Esophagus muscularis mucosa (tissue), 4 donors: ENCODE measurements at regions of chr12 and their contacts with region 1.

Region 1: DNA sequence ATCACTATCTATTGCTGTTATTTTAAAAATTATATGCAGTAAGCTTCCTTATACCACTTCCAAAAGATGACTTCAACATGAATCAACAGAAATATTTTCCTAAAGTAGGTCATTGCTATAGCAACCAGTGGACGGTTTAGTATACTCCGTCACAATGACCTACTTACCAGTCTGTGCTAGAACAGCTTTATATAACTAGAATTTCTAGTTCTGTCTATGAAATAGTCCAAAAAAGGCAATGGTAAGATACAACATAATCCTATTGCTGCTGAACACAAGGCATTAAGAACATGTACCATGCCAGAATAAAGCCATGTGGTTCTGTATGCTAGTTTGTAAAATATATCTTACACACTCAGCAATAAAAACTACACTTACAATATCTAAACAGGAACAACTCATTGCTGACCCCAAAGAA is 40.7 kb upstream of the MTERF2 start:
- DNase-seq: no peak
- H3K4me3 ChIP-seq: peak overlapping the region in 3 of 4 donors; percentile 5 to 27 (median 14)
- H3K27ac ChIP-seq: peak overlapping the region; percentile 75 to 88 (median 78)
- H3K4me1 ChIP-seq: peaks cover 50 to 68% (median 63%) of the 10 kb centered on the region in 4 donors
- H3K27me3 ChIP-seq: no peaks in the 10 kb centered on the region
- CTCF ChIP-seq: no peak
- EP300 ChIP-seq: peak; percentile 56
- POLR2A ChIP-seq: no peak

Region 2: GRCh38 chr12:106955377-106956047 is 72.1 kb before region 1 on chr12 and contains the start of gene TMEM263:
- intact Hi-C with region 1: loop called (anchors 5 kb)
- DNase-seq: peak; percentile 97
- H3K4me3 ChIP-seq: peak within 1 kb of the TSS; percentile 82 to 95 (median 94)
- H3K27ac ChIP-seq: peak within 1 kb of the TSS; percentile 96 to 100 (median 98)
- H3K4me1 ChIP-seq: peaks cover 22 to 43% (median 37%) of the 10 kb centered on the region in 4 donors
- H3K27me3 ChIP-seq: no peaks in the 10 kb centered on the region
- CTCF ChIP-seq: no peak
- EP300 ChIP-seq: no peak
- POLR2A ChIP-seq: peak; percentile 82
- total RNA-seq, gene TMEM263: 31.1 to 39.9 (median 34.5) TPM

Region 3: DNA sequence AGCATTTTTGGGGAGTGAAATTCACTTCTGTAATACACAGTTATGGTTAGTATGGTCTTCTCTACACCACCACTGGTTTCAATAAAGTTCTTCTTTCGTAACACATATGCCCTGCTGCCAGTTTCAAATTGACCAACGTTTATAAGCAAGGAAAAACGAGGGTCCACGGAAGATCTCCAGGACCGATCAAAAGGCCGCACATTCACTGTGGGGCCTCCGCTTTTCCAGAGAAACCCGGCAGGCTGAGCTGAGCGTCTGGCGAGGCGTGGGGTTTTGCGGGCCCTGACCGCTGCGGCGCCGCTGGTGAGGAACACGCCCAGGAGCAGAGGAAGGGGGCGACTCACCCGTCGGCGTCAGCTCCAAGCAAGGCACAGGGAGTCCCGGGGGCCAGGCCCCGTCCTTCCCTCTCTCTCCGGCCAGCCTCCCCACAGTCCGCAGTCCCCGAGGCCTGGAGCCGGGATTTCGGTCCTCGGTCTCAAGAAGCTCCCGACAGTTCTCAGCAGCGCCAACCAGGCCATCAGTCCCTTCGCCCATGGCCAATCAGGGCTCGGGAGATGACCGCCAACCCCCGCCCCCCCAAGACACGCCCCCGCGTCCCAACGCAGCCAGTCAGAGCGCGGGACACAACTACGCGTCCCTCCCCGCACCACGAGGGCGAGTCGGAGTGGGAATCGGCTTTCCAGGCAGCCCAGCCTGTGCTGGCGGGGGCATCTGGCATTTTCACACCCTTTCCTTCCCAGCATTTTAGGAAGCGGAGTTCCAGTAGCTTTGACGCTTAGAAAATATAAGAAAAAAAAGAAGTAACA is 40.8 kb before region 1 on chr12 and contains the start of gene MTERF2:
- intact Hi-C with region 1: loop called (anchors 5 kb)
- DNase-seq: peak; percentile 99
- H3K4me3 ChIP-seq: peak within 1 kb of the TSS; percentile 60 to 76 (median 70)
- H3K27ac ChIP-seq: peak within 1 kb of the TSS; percentile 85 to 93 (median 93)
- H3K4me1 ChIP-seq: peaks cover 21 to 60% (median 55%) of the 10 kb centered on the region in 4 donors
- H3K27me3 ChIP-seq: no peaks in the 10 kb centered on the region
- CTCF ChIP-seq: no peak
- EP300 ChIP-seq: no peak
- POLR2A ChIP-seq: no peak
- total RNA-seq, gene MTERF2: 16.7 to 22.2 (median 19.0) TPM

Region 4: DNA sequence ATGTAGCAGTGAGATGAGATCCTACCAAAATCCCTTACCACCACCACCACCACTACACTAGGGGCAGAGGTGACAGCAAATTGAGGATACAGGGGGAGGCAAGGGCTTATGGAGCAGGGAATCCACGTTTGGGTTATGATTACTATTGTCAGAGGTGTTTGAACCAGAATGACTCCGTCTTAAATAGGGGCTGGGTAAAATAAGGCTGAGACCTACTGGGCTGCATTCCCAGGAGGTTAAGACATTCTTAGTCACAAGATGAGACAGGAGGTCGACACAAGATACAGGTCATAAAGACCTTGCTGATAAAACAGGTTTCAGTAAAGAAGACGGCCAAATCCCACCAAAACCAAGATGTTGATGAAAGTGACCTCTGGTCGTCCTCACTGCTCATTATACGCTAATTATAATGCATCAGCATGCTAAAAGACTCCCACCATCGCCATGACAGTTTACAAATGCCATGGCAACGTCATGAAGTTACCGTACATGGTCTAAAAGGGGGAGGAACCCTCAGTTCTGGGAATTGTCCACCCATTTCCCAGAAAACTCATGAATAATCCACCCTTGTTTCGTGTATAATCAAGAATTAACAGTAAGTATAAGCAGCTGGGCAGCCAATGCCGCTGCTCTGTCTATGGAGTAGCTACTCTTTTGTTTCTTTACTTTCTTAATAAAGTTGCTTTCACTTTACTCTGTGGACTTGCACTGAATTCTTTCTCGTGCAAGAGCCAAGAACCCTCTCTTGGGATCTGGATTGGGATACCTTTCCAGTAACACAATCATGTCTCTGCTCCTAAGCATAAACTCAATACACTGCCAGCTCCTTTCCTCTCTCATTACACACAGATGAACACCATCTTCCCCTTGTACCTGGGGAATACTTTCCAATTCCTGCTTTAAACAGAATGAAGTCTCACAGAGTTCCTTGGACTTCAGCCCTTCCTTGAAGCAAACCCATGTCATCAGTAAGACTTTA is 82.4 kb after region 1 on chr12:
- intact Hi-C with region 1: no loop called
- DNase-seq: peak; percentile 90
- H3K4me3 ChIP-seq: peak overlapping the region in 3 of 4 donors; percentile 22 to 36 (median 24)
- H3K27ac ChIP-seq: no peak overlapping the region
- H3K4me1 ChIP-seq: peaks cover 0 to 16% (median 14%) of the 10 kb centered on the region in 4 donors
- H3K27me3 ChIP-seq: no peaks in the 10 kb centered on the region
- CTCF ChIP-seq: no peak
- EP300 ChIP-seq: no peak
- POLR2A ChIP-seq: no peak

Region 5: GRCh38 chr12:107317751-107318613 is 290.3 kb after region 1 on chr12:
- intact Hi-C with region 1: no loop called
- DNase-seq: no peak
- H3K4me3 ChIP-seq: peak overlapping the region; percentile 36 to 53 (median 40)
- H3K27ac ChIP-seq: no peak overlapping the region
- H3K4me1 ChIP-seq: peaks cover 12 to 42% (median 38%) of the 10 kb centered on the region in 4 donors
- H3K27me3 ChIP-seq: peaks cover 8 to 90% (median 34%) of the 10 kb centered on the region in 4 donors
- CTCF ChIP-seq: no peak
- EP300 ChIP-seq: no peak
- POLR2A ChIP-seq: no peak